PC-9 (cell line): ENCODE measurements at regions of chr2 and their contacts with region 1.

Region 1: GRCh38 chr2:105454801-105455485 is 56.1 kb upstream of the FHL2 start:
- DNase-seq: peak; percentile 63 to 97
- H3K4me3 ChIP-seq: peak overlapping the region; percentile 13; the same call in 1 of the 2 replicates
- H3K27ac ChIP-seq: peak overlapping the region; percentile 100
- H3K4me1 ChIP-seq: peaks cover 51% of the 10 kb centered on the region
- H3K27me3 ChIP-seq: no peaks in the 10 kb centered on the region
- CTCF ChIP-seq: peak; percentile 70

Region 2: DNA sequence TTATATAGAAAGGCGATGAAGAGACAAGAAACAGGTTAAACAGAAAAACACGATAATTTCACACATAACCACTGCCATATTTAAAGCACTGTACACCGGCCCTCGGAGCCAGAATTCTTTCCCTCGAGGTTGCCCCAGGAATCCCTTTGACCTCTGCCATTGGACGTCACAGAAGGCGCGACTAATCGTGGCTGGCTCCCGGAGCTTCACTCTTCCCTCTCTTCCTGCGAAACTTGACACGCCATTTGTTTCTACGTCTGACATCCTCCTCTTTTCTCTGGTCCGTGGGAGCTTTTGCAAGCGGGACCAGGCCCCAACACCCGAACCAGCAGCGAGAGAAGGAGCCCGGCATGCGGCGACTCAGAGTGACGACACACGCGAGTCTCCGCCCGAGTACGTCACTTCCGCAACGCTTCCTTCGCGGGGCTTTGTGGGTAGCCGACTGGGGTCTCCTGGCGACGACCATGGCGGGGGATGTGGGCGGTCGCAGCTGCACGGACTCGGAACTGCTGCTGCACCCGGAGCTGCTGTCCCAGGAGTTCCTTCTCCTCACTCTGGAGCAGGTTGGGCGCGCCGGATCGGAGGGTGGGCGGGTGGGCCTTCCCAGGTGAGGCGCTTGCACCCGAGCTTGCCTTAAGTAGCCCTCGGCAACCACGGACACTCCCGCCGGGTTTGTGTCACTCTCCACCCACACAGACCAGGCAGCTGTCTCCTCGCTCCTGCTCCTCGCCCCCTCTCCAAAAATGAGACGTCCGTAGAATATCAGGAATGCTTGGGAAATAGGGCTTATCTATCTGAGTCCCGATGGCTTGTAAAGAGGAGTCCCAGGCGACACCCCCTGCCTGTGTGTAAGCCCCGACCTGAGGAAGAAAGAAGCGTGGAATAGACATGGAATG is 117.6 kb before region 1 on chr2 and contains the start of gene C2orf49:
- CTCF ChIA-PET with region 1: no interaction called
- POLR2A ChIA-PET with region 1: interaction called, 34 read pairs
- intact Hi-C with region 1: no loop called
- DNase-seq: peak; percentile 63 to 77
- H3K4me3 ChIP-seq: peak within 1 kb of the TSS; percentile 100
- H3K27ac ChIP-seq: peak within 1 kb of the TSS; percentile 98
- H3K4me1 ChIP-seq: peaks cover 20% of the 10 kb centered on the region
- H3K27me3 ChIP-seq: no peaks in the 10 kb centered on the region
- CTCF ChIP-seq: no peak
- total RNA-seq, gene C2orf49: 16.2 and 19.8 TPM in 2 replicates

Region 3: DNA sequence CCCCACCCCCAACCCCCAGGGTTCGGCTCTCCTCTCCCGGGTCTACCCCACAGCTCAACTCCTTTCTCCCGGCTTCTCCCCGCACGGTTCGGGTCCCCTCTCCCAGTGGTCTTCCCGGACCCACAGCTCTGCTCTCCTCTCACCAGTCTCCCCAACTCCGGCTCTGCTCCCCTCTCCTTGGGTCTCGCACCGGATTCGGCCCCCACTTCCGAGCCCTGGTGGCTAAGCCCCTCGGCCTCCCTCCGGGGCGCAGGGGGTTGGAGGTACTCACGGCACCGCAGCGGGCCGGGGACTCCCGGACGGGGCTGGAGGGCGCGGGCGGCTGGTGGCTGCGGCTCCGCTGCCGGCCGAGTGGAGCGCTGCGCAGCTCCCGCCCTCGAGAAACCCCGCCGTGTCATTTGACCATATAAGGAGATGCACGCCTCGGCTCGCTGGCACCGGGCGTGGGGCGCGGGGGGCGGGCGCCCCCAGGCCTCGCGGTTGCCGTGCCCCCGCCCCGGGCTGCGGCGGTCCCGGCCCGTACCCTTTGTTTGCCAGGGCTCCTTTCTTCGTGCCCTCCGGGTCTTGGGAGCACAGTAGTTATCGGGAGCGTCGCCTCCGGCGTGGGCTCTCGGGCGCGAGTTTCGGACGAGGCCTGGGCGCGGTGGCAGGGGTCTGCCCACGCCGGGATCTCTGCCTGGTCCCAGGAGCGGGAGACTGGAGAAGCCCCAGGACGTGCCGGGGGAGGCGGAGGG is 56.1 kb before region 1 on chr2 and contains the start of gene FHL2:
- CTCF ChIA-PET with region 1: interaction called, 4 read pairs
- POLR2A ChIA-PET with region 1: interaction called, 12 read pairs
- intact Hi-C with region 1: loop called (anchors 1 kb)
- DNase-seq: peak; percentile 61 to 81
- H3K4me3 ChIP-seq: peak within 1 kb of the TSS; percentile 100
- H3K27ac ChIP-seq: peak within 1 kb of the TSS; percentile 88
- H3K4me1 ChIP-seq: peaks cover 74% of the 10 kb centered on the region
- H3K27me3 ChIP-seq: no peaks in the 10 kb centered on the region
- CTCF ChIP-seq: peak; percentile 41; the same call in 1 of the 2 replicates
- total RNA-seq, gene FHL2: 109 and 117 TPM in 2 replicates

Region 4: GRCh38 chr2:105403785-105404698 is 50.9 kb before region 1 on chr2:
- CTCF ChIA-PET with region 1: interaction called, 4 read pairs
- POLR2A ChIA-PET with region 1: interaction called, 11 read pairs
- intact Hi-C with region 1: loop called (anchors 1 kb)
- DNase-seq: peak; percentile 82 to 98
- H3K4me3 ChIP-seq: peak overlapping the region; percentile 41; the same call in 1 of the 2 replicates
- H3K27ac ChIP-seq: peak overlapping the region; percentile 96
- H3K4me1 ChIP-seq: peaks cover 77% of the 10 kb centered on the region
- H3K27me3 ChIP-seq: no peaks in the 10 kb centered on the region
- CTCF ChIP-seq: peak; percentile 64

Region 5: GRCh38 chr2:105510761-105511610 is 56.0 kb after region 1 on chr2:
- CTCF ChIA-PET with region 1: no interaction called
- POLR2A ChIA-PET with region 1: no interaction called
- intact Hi-C with region 1: loop called (anchors 2 kb)
- DNase-seq: peak; percentile 11 to 71
- H3K4me3 ChIP-seq: no peak overlapping the region
- H3K27ac ChIP-seq: peak overlapping the region; percentile 64
- H3K4me1 ChIP-seq: peaks cover 26% of the 10 kb centered on the region
- H3K27me3 ChIP-seq: no peaks in the 10 kb centered on the region
- CTCF ChIP-seq: no peak

Region 6: DNA sequence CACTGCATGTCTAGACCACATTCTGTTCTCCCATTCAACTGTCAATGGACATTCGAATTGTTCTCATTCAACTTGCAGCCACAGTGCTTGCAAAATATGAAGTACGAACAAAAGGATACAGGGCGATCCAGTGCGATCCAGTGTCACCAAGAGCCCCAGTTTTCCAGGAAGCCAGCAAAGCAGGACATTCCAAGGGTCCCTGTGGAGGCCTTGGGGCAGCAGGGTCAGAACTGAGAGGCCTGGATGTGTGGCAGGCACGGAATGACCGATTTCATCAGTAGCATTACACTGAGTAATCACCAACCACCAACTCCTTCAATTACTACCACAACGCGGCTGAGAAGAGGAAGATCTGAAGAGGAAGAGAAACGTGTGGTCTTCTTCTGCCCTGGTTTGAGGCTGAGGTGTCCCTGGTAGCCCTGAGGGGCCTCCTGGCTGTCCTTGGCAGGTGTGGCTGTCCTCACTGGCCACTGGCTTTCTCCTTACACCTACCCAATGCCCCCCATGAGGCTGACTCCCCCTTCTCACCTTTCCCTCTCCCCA is 116.6 kb after region 1 on chr2:
- CTCF ChIA-PET with region 1: no interaction called
- POLR2A ChIA-PET with region 1: no interaction called
- intact Hi-C with region 1: no loop called
- DNase-seq: no peak
- H3K4me3 ChIP-seq: no peak overlapping the region
- H3K27ac ChIP-seq: no peak overlapping the region
- H3K4me1 ChIP-seq: peaks cover 1% of the 10 kb centered on the region
- H3K27me3 ChIP-seq: peaks cover 63% of the 10 kb centered on the region
- CTCF ChIP-seq: no peak

Region 7: DNA sequence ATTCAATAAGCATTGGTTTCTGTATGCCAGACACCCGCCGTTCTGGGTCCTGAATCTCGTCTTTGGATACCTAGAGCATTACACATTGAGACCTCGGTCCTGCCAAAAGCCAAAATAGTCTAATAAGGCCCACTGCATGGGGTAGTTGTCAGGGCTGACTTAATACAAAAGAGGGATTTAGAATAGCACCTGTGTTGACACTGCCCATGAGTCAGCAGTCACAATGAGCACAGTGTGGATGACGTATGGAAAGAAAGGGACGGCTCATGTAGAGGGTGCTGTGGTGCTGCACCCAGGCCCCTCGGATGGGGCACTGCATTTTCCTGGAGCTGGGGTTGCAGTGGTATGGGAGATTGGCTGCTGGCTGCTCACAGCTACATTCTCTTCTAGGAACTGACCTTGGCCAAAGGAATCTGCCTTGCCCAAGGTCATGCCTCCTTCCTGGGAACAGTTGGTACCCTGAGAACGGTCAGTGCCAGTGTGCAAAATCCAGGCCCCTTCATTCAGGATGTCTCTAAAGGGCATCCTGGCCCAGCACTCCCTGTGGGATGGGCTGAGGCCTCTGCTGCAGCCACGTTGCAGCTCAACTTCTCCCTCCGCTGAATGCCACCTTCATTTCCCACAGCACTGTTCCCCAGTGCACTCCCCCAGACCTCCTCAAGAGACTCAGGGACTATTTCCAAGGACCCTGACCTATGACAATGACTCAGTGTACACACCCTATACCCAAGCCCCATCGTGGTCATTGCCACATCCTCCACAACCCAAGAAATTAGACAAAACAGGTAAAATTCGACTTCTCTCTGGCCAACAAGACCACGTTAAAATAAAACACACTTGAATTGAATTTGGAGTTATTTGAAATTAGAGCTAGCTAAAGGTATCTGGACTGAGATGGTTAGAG is 163.1 kb after region 1 on chr2:
- CTCF ChIA-PET with region 1: no interaction called
- POLR2A ChIA-PET with region 1: no interaction called
- intact Hi-C with region 1: no loop called
- DNase-seq: peak; percentile 4 to 72
- H3K4me3 ChIP-seq: no peak overlapping the region
- H3K27ac ChIP-seq: no peak overlapping the region
- H3K4me1 ChIP-seq: no peaks in the 10 kb centered on the region
- H3K27me3 ChIP-seq: peaks cover 32% of the 10 kb centered on the region
- CTCF ChIP-seq: no peak

Region 8: DNA sequence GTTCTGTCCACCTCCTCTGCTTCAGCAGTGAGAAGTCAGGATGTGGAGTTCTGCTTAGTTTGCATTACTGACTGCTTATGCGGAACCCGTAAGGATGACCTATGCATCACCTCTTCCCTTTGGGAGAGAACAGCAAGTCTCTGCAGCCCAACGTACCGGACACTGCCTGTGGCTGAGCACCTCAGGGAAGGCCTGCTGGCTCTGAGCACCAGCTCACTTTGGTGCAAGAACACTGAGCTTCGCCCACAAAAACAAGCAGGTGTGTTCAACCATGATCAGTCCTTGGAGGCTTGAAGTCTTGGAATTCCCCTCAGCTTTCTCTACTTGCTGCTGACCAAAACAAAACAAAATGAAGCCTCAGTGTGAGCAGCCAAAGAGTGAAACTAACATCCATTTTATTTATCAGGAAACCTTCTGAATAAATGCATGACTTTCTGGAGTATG is 237.0 kb after region 1 on chr2:
- CTCF ChIA-PET with region 1: no interaction called
- POLR2A ChIA-PET with region 1: no interaction called
- intact Hi-C with region 1: no loop called
- DNase-seq: no peak
- H3K4me3 ChIP-seq: no peak overlapping the region
- H3K27ac ChIP-seq: no peak overlapping the region
- H3K4me1 ChIP-seq: no peaks in the 10 kb centered on the region
- H3K27me3 ChIP-seq: peaks cover 32% of the 10 kb centered on the region
- CTCF ChIP-seq: no peak

Region 9: DNA sequence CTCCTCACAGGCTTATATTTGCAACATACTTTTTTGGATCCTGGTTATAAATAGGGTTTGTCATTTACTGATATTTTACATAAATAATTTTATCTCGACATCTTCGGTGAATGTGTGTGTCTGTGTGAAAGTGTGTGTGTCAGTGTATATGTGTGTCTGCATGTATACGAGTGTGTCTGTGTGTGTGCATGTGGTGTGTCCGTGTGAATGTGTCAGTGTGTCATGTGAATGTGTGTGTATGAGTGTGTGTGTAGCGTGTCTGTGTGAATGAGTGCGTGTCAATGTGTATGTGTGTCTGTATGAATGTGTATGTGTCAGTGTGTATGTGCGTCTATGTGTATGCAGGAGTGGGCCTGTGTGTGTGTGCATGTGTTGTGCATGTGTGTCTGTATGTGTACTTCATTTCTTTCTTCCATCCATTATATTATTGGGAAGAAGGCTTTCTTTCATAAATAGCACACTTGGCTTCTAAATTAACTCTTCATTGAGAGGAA is 1269.4 kb after region 1 on chr2:
- CTCF ChIA-PET with region 1: no interaction called
- POLR2A ChIA-PET with region 1: no interaction called
- intact Hi-C with region 1: no loop called
- DNase-seq: no peak
- H3K4me3 ChIP-seq: no peak overlapping the region
- H3K27ac ChIP-seq: no peak overlapping the region
- H3K4me1 ChIP-seq: no peaks in the 10 kb centered on the region
- H3K27me3 ChIP-seq: peaks cover 16% of the 10 kb centered on the region
- CTCF ChIP-seq: no peak